Colonic mucosa (tissue), 4 donors: ENCODE measurements at regions of chr1 and their contacts with region 1.

Region 1: GRCh38 chr1:24111996-24112779 is at the start of gene MYOM3:
- DNase-seq: peak; percentile 73
- H3K4me3 ChIP-seq: no peak within 1 kb of the TSS
- H3K27ac ChIP-seq: no peak within 1 kb of the TSS
- H3K4me1 ChIP-seq: peaks cover 7% of the 10 kb centered on the region
- H3K27me3 ChIP-seq: no peaks in the 10 kb centered on the region
- CTCF ChIP-seq: no peak
- total RNA-seq, gene MYOM3: 1.8 to 3.3 TPM

Region 2: GRCh38 chr1:24070821-24071393 is 41.3 kb before region 1 on chr1:
- intact Hi-C with region 1: loop called (anchors 5 kb)
- DNase-seq: peak; percentile 83
- H3K4me3 ChIP-seq: no peak overlapping the region
- H3K27ac ChIP-seq: no peak overlapping the region
- H3K4me1 ChIP-seq: no peaks in the 10 kb centered on the region
- H3K27me3 ChIP-seq: no peaks in the 10 kb centered on the region
- CTCF ChIP-seq: peak; percentile 83